ENCODE measurements at regions of chr16 and their contacts with region 1.

Region 1: GRCh38 chr16:71311553-71312158 is 22.5 kb upstream of the CMTR2 start:
- DNase-seq: peak; percentile 15 to 70
- H3K4me3 ChIP-seq: no peak overlapping the region
- H3K27ac ChIP-seq: no peak overlapping the region
- H3K4me1 ChIP-seq: peaks cover 0 to 6% (median 0%) of the 10 kb centered on the region in 4 experiments; a peak in 3 of 7 replicates
- H3K27me3 ChIP-seq: no peaks in the 10 kb centered on the region
- CTCF ChIP-seq: peak; percentile 55 to 92 (median 87)
- EP300 ChIP-seq: no peak
- POLR2A ChIP-seq: no peak
- RAD21 ChIP-seq: peak; percentile 91 to 95

Region 2: GRCh38 chr16:71185347-71185746 is 126.3 kb before region 1 on chr16:
- CTCF ChIA-PET with region 1: interaction called, 11 read pairs
- POLR2A ChIA-PET with region 1: no interaction called
- DNase-seq: no peak
- H3K4me3 ChIP-seq: no peak overlapping the region
- H3K27ac ChIP-seq: no peak overlapping the region
- H3K4me1 ChIP-seq: no peaks in the 10 kb centered on the region
- H3K27me3 ChIP-seq: no peaks in the 10 kb centered on the region
- CTCF ChIP-seq: no peak
- EP300 ChIP-seq: no peak
- POLR2A ChIP-seq: no peak
- RAD21 ChIP-seq: no peak

Region 3: GRCh38 chr16:71214746-71215381 is 96.8 kb before region 1 on chr16:
- CTCF ChIA-PET with region 1: interaction called, 10 read pairs
- POLR2A ChIA-PET with region 1: no interaction called
- DNase-seq: no peak
- H3K4me3 ChIP-seq: no peak overlapping the region
- H3K27ac ChIP-seq: no peak overlapping the region
- H3K4me1 ChIP-seq: no peaks in the 10 kb centered on the region; a peak in 1 of 7 replicates
- H3K27me3 ChIP-seq: no peaks in the 10 kb centered on the region
- CTCF ChIP-seq: peak in 2 of 3 experiments; percentile 30 to 32; a peak in 2 of 4 replicates
- EP300 ChIP-seq: no peak
- POLR2A ChIP-seq: no peak
- RAD21 ChIP-seq: peak; percentile 49 to 63

Region 4: GRCh38 chr16:71249399-71249798 is 62.3 kb before region 1 on chr16:
- CTCF ChIA-PET with region 1: interaction called, 49 read pairs
- POLR2A ChIA-PET with region 1: no interaction called
- DNase-seq: no peak
- H3K4me3 ChIP-seq: no peak overlapping the region
- H3K27ac ChIP-seq: no peak overlapping the region
- H3K4me1 ChIP-seq: peaks cover 0 to 5% (median 0%) of the 10 kb centered on the region in 4 experiments; a peak in 3 of 7 replicates
- H3K27me3 ChIP-seq: no peaks in the 10 kb centered on the region
- CTCF ChIP-seq: peak; percentile 56 to 84 (median 74)
- EP300 ChIP-seq: no peak
- POLR2A ChIP-seq: no peak
- RAD21 ChIP-seq: peak; percentile 45 to 67; a peak in 3 of 4 replicates

Region 5: GRCh38 chr16:71297341-71297634 is 14.4 kb before region 1 on chr16:
- CTCF ChIA-PET with region 1: interaction called, 35 read pairs
- POLR2A ChIA-PET with region 1: interaction called, 3 read pairs
- DNase-seq: no peak
- H3K4me3 ChIP-seq: no peak overlapping the region
- H3K27ac ChIP-seq: no peak overlapping the region
- H3K4me1 ChIP-seq: no peaks in the 10 kb centered on the region
- H3K27me3 ChIP-seq: no peaks in the 10 kb centered on the region
- CTCF ChIP-seq: no peak
- EP300 ChIP-seq: no peak
- POLR2A ChIP-seq: no peak
- RAD21 ChIP-seq: no peak

Region 6: GRCh38 chr16:71339236-71340176 is 27.9 kb after region 1 on chr16:
- CTCF ChIA-PET with region 1: interaction called, 24 read pairs
- POLR2A ChIA-PET with region 1: no interaction called
- DNase-seq: no peak
- H3K4me3 ChIP-seq: no peak overlapping the region
- H3K27ac ChIP-seq: no peak overlapping the region
- H3K4me1 ChIP-seq: peaks cover 0 to 2% (median 0%) of the 10 kb centered on the region in 4 experiments; a peak in 2 of 7 replicates
- H3K27me3 ChIP-seq: no peaks in the 10 kb centered on the region
- CTCF ChIP-seq: no peak
- EP300 ChIP-seq: no peak
- POLR2A ChIP-seq: no peak
- RAD21 ChIP-seq: no peak

Region 7: GRCh38 chr16:71358464-71358998 is 46.9 kb after region 1 on chr16 and contains the start of gene CALB2:
- CTCF ChIA-PET with region 1: interaction called, 38 read pairs
- POLR2A ChIA-PET with region 1: no interaction called
- DNase-seq: peak; percentile 27 to 91
- H3K4me3 ChIP-seq: peak within 1 kb of the TSS; percentile 30 to 65 (median 51); a peak in 7 of 8 replicates
- H3K27ac ChIP-seq: no peak within 1 kb of the TSS
- H3K4me1 ChIP-seq: peaks cover 0 to 12% (median 6%) of the 10 kb centered on the region in 4 experiments; a peak in 5 of 7 replicates
- H3K27me3 ChIP-seq: peaks cover 0 to 22% (median 18%) of the 10 kb centered on the region in 4 experiments; a peak in 6 of 7 replicates
- CTCF ChIP-seq: peak; percentile 77 to 97 (median 85)
- EP300 ChIP-seq: 0 out of 3 replicates have a peak, but pooled peaks of 1 of the 2 experiments have one; percentile 21
- POLR2A ChIP-seq: peak in 1 of 2 experiments; percentile 64; a peak in 1 of 3 replicates
- RAD21 ChIP-seq: peak; percentile 73 to 98
- total RNA-seq, gene CALB2: 1.9 and 2.7 TPM in 2 replicates

Region 8: DNA sequence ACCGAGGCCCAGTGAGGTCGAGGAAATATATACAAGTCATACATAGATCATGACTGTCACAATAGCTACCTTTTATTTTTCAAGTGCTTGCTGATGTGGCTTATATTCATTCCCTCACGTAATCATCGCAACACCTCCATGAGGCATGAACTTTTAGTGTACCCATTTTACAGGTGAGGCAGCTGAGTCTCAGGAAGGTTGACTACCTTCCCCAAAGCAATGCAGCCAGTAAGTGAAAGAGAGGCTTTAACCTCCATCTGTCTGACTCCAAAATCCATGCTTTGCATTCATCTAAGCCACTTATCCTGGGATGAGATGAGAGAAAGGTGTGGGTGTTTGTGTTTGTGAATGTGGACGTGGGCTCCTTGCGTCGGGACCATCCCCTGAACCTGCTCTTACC is 77.7 kb after region 1 on chr16:
- CTCF ChIA-PET with region 1: no interaction called
- POLR2A ChIA-PET with region 1: no interaction called
- DNase-seq: no peak
- H3K4me3 ChIP-seq: no peak overlapping the region
- H3K27ac ChIP-seq: no peak overlapping the region
- H3K4me1 ChIP-seq: peaks cover 16 to 27% (median 22%) of the 10 kb centered on the region in 4 experiments; a peak in 6 of 7 replicates
- H3K27me3 ChIP-seq: 0 out of 7 replicates have a peak, but pooled peaks cover 0 to under 1% (median 0%) of the 10 kb centered on the region in 4 experiments
- CTCF ChIP-seq: no peak
- EP300 ChIP-seq: no peak
- POLR2A ChIP-seq: no peak
- RAD21 ChIP-seq: no peak

Region 9: GRCh38 chr16:71537643-71538042 is 226.0 kb after region 1 on chr16:
- CTCF ChIA-PET with region 1: no interaction called
- POLR2A ChIA-PET with region 1: no interaction called
- DNase-seq: peak in 1 of 2 experiments; percentile 76
- H3K4me3 ChIP-seq: no peak overlapping the region
- H3K27ac ChIP-seq: no peak overlapping the region
- H3K4me1 ChIP-seq: no peaks in the 10 kb centered on the region
- H3K27me3 ChIP-seq: no peaks in the 10 kb centered on the region
- CTCF ChIP-seq: peak; percentile 45 to 89 (median 84)
- EP300 ChIP-seq: no peak
- POLR2A ChIP-seq: no peak
- RAD21 ChIP-seq: peak; percentile 87 to 91

Measured in H1 (cell line).